ENCODE measurements at regions of chr20 and their contacts with region 1.

Region 1: GRCh38 chr20:58309575-58310290 is at the start of gene RAB22A:
- H3K4me3 Mint-ChIP-seq: peak within 1 kb of the TSS; percentile 87
- H3K27ac Mint-ChIP-seq: peak within 1 kb of the TSS; percentile 91
- H3K4me1 Mint-ChIP-seq: peaks cover 51% of the 10 kb centered on the region
- H3K27me3 Mint-ChIP-seq: peaks cover 1% of the 10 kb centered on the region

Region 2: DNA sequence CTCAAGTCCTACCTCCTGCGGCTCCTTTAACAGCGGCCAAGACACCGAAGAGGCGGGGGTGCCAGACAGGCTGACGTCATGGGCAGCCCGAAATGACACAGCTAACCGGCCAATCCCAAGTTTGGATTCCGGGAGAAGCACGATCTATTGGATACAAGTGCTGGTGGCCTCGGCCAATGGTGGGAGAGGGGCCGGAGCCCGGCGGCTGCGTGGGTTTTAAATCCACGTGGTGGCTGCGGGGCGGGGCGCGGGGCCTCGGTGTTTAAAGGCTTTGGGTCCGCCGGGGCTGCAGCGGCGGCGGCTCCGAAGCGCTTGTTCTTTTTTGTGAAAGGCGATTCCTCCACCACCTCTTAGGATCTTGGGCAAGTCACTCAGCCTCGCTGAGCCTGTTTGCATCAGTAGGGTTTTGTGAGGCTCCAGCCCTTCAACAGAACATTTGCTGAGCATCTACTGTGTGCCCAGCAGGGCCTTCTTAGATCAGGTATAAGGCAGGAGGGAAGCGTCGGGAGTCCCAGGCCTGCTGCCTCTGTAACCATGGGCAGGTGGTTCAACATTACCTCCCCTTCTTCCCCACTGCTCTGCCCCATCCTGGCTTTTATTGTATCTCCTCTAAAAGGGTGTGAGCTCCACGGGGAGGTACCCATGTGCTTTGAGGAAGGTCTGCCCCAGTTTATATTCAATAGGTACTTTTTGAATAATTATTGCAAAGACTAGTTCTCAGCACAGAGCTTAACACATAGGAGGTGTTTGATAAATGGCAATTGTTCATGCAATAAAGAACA is 591.1 kb before region 1 on chr20:
- intact Hi-C with region 1: loop called (anchors 10 kb)
- H3K4me3 Mint-ChIP-seq: peak overlapping the region; percentile 53
- H3K27ac Mint-ChIP-seq: no peak overlapping the region
- H3K4me1 Mint-ChIP-seq: peaks cover 7% of the 10 kb centered on the region
- H3K27me3 Mint-ChIP-seq: peaks cover 33% of the 10 kb centered on the region

Region 3: DNA sequence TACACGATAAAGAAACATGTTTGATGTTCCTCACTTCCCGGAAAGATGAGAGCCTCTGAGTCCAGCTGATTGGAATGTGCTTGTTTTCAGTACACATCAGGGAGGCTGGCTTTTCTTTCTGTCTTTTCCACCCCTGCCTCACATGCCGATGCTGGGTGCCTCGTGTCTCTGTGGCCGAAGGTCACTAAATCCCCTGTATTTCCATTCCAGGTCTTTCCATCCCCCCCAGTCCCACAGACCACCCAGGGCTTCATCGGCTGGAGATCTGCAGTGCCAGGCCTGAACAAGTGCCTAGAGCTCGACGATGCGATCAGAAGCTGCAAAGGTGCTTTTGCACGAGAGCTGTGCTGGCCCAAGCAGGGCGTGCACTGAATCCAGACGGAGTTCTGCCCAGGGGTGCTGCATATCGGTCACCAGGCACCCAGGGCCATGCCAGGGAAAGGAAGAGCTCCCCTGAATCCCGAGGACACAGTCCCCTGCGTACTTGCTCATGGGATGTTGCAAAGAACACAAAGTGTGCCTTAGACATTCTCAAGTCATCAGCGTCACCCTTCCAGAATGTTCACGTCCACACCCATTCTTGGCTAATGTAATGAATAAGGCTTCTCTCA is 149.2 kb before region 1 on chr20:
- intact Hi-C with region 1: no loop called
- H3K4me3 Mint-ChIP-seq: no peak overlapping the region
- H3K27ac Mint-ChIP-seq: no peak overlapping the region
- H3K4me1 Mint-ChIP-seq: no peaks in the 10 kb centered on the region
- H3K27me3 Mint-ChIP-seq: peaks cover 3% of the 10 kb centered on the region

Region 4: DNA sequence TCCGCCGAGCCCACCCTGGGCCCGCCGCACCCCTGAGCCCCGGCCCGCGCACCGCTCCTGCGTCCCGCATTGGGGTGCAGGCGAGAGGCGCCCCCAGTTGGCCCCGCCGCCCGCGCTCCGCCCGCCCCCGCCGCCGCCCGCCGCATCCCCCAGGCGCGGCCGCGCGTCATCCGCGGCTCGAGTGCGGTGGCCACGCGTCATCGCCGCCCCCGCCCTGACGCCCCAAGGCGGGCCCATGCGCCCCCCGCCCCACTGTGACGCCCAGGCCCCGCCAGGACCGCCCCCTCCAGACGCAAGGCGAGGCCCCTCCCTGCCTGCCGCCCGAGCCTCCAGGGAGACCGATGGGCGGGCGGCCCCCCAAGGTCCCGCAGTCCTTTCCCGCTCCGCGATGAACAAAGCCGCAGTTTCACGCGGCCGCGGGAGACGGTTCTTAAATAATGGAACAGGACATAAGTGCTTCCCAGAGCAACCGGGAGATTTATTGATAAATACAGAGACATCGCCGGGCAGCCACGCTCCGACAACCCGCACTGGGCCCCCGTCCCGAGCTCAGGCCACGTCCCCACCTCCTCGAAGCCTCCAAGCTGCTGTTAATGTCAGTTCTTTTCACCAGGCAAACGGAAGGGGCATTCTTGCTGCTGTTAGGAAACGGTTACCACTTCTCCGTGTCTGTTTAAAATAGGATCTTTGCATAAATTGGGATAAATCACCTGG is 81.1 kb before region 1 on chr20 and contains the start of gene ANKRD60:
- intact Hi-C with region 1: no loop called
- H3K4me3 Mint-ChIP-seq: peak within 1 kb of the TSS; percentile 67
- H3K27ac Mint-ChIP-seq: no peak within 1 kb of the TSS
- H3K4me1 Mint-ChIP-seq: peaks cover 10% of the 10 kb centered on the region
- H3K27me3 Mint-ChIP-seq: peaks cover 69% of the 10 kb centered on the region

Region 5: GRCh38 chr20:58361481-58362205 is 51.9 kb after region 1 on chr20:
- intact Hi-C with region 1: no loop called
- H3K4me3 Mint-ChIP-seq: no peak overlapping the region
- H3K27ac Mint-ChIP-seq: no peak overlapping the region
- H3K4me1 Mint-ChIP-seq: peaks cover 6% of the 10 kb centered on the region
- H3K27me3 Mint-ChIP-seq: no peaks in the 10 kb centered on the region

Region 6: GRCh38 chr20:58388882-58389323 is 79.2 kb after region 1 on chr20 and contains the start of gene VAPB:
- intact Hi-C with region 1: loop called (anchors 1 kb)
- H3K4me3 Mint-ChIP-seq: peak within 1 kb of the TSS; percentile 87
- H3K27ac Mint-ChIP-seq: peak within 1 kb of the TSS; percentile 92
- H3K4me1 Mint-ChIP-seq: peaks cover 43% of the 10 kb centered on the region
- H3K27me3 Mint-ChIP-seq: peaks cover 19% of the 10 kb centered on the region

Region 7: DNA sequence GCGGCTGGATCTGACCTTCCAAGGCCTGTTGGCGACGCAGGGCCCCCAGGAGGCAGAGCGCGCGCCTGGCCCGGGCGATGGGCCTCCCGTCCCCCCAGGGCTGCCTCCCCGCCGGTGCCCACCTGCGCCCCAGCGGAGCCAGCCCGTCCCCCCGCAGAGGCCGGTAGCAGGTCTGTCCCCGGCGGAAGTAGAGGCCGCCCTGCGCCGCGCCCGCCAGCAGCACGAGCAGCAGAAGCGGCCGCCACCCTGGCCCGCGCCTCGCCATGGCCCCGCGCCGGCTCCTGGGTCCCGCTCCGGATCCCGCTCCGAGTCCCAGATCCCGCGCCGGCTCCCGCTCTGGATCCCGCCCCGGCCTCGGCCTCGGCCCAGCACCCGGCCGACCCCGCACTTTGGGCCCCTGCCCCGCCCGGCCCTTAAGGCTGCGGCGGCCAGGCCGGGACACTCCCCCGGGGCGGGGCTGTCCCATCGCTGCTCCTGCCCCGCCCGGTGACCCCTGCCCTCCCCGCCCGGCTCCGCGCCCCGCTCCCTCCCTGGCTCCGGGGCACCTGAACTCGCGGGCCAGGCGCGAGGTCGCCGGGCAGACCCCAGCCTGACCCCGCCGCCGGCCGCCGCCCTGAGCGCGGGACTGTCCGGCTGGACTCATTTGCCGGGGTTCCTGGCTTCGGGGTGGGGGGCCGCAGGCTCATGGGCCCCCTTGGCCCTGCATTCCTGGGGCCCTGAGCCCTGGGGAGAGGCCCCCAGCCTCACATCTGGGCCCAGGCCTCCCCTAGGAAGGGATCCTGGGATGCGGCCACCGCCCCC is 697.3 kb after region 1 on chr20 and contains the start of gene CTSZ:
- intact Hi-C with region 1: no loop called
- H3K4me3 Mint-ChIP-seq: peak within 1 kb of the TSS; percentile 98
- H3K27ac Mint-ChIP-seq: peak within 1 kb of the TSS; percentile 90
- H3K4me1 Mint-ChIP-seq: peaks cover 80% of the 10 kb centered on the region
- H3K27me3 Mint-ChIP-seq: no peaks in the 10 kb centered on the region